ENCODE measurements at regions of chr7 and their contacts with region 1.

Region 1: GRCh38 chr7:101138213-101138870 is 11.4 kb downstream of the SERPINE1 start:
- DNase-seq: peak in 1 of 2 experiments; percentile 80
- H3K4me3 ChIP-seq: peak overlapping the region in 1 of 4 experiments; percentile 29; a peak in 2 of 8 replicates
- H3K27ac ChIP-seq: no peak overlapping the region
- H3K4me1 ChIP-seq: peaks cover 2 to 14% (median 6%) of the 10 kb centered on the region in 4 experiments; a peak in 6 of 7 replicates
- H3K27me3 ChIP-seq: peaks cover 0 to 2% (median 0%) of the 10 kb centered on the region in 4 experiments; a peak in 1 of 7 replicates
- CTCF ChIP-seq: peak; percentile 57 to 76 (median 64)
- EP300 ChIP-seq: no peak
- POLR2A ChIP-seq: no peak
- RAD21 ChIP-seq: peak; percentile 60 to 69

Region 2: DNA sequence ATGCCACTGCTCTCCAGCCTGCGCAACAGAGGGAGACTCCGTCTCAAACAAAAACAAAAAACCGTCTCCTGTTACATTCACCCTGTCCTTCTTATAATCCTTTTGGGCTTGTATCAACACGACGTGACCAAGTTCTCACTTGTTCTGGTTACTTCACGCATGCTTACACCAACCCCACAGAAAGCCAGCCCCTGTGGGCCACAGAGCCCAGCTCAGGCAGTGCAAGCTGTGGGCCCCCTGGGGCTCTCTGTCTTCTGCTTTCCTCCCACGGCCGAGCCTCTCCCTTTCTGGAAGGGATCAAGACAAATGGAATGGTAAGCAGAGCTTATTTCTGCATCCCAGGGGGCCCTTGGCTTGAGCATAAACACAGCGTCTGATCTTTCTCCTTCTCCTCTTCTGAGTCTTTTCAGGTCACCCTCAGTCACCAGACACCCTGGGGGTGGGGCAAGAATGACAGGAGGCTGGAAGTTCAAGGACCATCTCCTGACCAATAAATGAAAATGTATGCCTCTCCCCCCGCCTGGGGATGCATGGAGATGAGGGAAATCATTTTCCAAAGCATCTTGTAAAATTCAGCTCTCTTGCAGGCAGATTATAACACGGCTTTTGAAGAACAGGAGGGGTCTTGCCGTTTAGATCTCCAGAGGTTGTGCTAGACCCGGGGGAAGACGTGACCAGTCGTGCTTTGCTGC is 72.1 kb before region 1 on chr7:
- CTCF ChIA-PET with region 1: no interaction called
- POLR2A ChIA-PET with region 1: no interaction called
- DNase-seq: no peak
- H3K4me3 ChIP-seq: no peak overlapping the region
- H3K27ac ChIP-seq: no peak overlapping the region
- H3K4me1 ChIP-seq: peaks cover 0 to 11% (median 8%) of the 10 kb centered on the region in 4 experiments; a peak in 5 of 7 replicates
- H3K27me3 ChIP-seq: no peaks in the 10 kb centered on the region
- CTCF ChIP-seq: no peak
- EP300 ChIP-seq: no peak
- POLR2A ChIP-seq: no peak
- RAD21 ChIP-seq: no peak

Region 3: DNA sequence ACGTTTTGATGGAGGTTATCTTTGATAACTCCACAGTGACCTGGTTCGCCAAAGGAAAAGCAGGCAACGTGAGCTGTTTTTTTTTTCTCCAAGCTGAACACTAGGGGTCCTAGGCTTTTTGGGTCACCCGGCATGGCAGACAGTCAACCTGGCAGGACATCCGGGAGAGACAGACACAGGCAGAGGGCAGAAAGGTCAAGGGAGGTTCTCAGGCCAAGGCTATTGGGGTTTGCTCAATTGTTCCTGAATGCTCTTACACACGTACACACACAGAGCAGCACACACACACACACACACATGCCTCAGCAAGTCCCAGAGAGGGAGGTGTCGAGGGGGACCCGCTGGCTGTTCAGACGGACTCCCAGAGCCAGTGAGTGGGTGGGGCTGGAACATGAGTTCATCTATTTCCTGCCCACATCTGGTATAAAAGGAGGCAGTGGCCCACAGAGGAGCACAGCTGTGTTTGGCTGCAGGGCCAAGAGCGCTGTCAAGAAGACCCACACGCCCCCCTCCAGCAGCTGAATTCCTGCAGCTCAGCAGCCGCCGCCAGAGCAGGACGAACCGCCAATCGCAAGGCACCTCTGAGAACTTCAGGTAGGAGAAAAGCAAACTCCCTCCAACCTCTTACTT is 11.6 kb before region 1 on chr7 and contains the start of gene SERPINE1:
- CTCF ChIA-PET with region 1: interaction called, 80 read pairs
- POLR2A ChIA-PET with region 1: interaction called, 8 read pairs
- DNase-seq: peak in 1 of 2 experiments; percentile 73
- H3K4me3 ChIP-seq: peak within 1 kb of the TSS in 3 of 4 experiments; percentile 9 to 34 (median 29); a peak in 3 of 8 replicates
- H3K27ac ChIP-seq: no peak within 1 kb of the TSS
- H3K4me1 ChIP-seq: peaks cover 11 to 19% (median 12%) of the 10 kb centered on the region in 4 experiments
- H3K27me3 ChIP-seq: no peaks in the 10 kb centered on the region; a peak in 1 of 7 replicates
- CTCF ChIP-seq: peak; percentile 6 to 39 (median 16); a peak in 3 of 4 replicates
- EP300 ChIP-seq: no peak
- POLR2A ChIP-seq: no peak
- RAD21 ChIP-seq: no peak
- total RNA-seq, gene SERPINE1: 5.6 and 6.8 TPM in 2 replicates

Region 4: DNA sequence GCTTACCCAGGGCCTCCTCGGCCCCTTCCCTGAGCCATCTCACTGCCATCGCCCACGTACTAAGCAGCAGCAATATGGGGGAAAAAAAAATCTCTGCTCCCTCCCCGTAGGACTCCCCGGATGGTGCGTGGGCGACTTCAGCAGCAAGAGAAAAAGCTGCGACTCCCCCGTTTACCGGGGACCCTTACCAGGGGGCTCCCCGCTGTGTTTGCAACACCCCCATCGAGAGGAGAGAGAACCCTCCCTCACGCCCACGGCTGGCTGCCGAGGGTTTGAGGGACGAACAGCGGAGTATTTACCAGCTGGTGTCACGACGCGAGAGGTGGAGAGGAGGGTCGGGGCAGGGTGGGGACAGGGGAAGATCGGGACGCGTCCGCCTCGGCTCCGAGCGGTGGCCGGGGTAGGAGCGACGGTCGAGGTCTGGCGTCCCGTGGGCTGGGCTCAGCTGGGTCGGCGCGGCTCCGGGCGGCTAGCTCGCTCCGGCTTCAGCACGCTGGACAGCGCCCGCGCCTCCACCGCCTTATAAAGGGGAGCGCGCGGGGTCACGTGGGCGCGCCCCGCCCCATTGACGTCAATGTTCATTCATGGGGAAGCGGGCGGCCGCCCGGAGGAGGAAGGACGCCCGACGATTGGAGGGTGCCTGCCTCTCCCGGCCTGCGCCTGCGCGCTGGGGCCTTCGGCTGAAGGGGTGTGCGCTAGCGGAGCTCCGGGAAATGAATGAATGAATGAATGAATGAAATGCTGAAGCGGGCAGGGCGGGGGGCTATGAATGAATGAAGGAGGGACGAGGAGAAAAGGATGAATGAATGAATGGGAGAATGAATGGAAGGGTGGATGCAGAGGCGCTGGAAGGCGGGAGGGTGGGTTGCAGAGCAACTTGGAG is 27.0 kb after region 1 on chr7 and contains the start of gene VGF:
- CTCF ChIA-PET with region 1: interaction called, 115 read pairs
- POLR2A ChIA-PET with region 1: no interaction called
- DNase-seq: peak; percentile 93 to 98
- H3K4me3 ChIP-seq: peak within 1 kb of the TSS; percentile 46 to 74 (median 55)
- H3K27ac ChIP-seq: no peak within 1 kb of the TSS
- H3K4me1 ChIP-seq: peaks cover 21 to 64% (median 43%) of the 10 kb centered on the region in 4 experiments
- H3K27me3 ChIP-seq: peaks cover 17 to 67% (median 48%) of the 10 kb centered on the region in 4 experiments
- CTCF ChIP-seq: no peak
- EP300 ChIP-seq: peak in 1 of 2 experiments; percentile 79; a peak in 1 of 3 replicates
- POLR2A ChIP-seq: no peak
- RAD21 ChIP-seq: no peak
- total RNA-seq, gene VGF: 7.0 and 7.4 TPM in 2 replicates

Region 5: DNA sequence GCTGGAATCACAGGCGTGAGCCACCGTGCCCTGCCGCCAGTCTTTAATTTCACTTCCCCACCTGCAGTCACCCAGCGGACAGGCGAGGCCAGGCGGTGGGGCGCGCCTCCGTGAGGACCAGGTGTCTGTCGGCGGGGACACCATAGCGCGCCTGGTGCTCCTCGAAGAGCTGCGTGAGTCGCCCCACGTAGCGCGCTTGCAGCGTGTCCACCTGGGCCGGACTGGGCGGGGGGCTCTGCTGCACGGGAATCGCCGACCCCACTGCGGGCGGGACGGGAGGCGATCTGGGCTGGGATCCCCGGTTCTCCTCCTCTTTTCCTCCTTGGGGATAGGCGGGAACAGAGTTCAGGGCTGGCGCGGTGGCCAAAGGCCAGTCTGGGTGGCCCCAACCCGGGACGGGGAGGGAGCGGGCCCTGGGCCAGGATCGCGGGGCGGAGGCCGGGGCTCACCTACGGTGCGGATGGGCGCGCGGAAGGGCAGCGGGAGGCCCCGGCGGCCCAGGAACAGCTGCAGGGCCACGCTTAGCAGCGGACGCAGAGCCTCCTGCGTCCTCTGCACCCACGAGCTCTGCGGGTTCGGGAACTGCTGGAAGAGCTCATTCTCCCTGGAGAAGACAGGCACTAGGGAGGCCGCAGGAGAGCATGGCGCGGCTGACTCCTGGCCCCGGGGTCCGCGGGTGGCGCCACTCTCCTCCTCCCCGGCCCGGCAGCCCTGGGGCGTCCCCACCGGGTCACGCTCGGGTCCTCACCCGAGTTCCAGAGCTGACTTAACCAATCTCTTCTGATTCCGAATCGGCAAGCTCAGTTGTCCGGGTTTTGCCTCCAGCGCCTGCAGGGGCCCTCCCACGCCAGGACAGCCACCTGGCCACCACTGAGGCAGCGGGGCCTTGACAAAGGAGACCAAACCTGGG is 63.6 kb after region 1 on chr7:
- CTCF ChIA-PET with region 1: interaction called, 168 read pairs
- POLR2A ChIA-PET with region 1: interaction called, 3 read pairs
- DNase-seq: peak in 1 of 2 experiments; percentile 78
- H3K4me3 ChIP-seq: peak overlapping the region; percentile 37 to 60 (median 47)
- H3K27ac ChIP-seq: no peak overlapping the region
- H3K4me1 ChIP-seq: peaks cover 5 to 21% (median 14%) of the 10 kb centered on the region in 4 experiments
- H3K27me3 ChIP-seq: peaks cover 0 to 16% (median 9%) of the 10 kb centered on the region in 4 experiments; a peak in 5 of 7 replicates
- CTCF ChIP-seq: no peak
- EP300 ChIP-seq: no peak
- POLR2A ChIP-seq: no peak; a peak in 1 of 3 replicates
- RAD21 ChIP-seq: no peak